ENCODE measurements at regions of chr4 and their contacts with region 1.

Region 1: GRCh38 chr4:156771171-156771837 is 200.3 kb downstream of the PDGFC start:
- DNase-seq: peak; percentile 98
- H3K4me3 Mint-ChIP-seq: peak overlapping the region; percentile 63
- H3K27ac Mint-ChIP-seq: peak overlapping the region; percentile 52
- H3K4me1 Mint-ChIP-seq: peaks cover 39% of the 10 kb centered on the region
- H3K27me3 Mint-ChIP-seq: no peaks in the 10 kb centered on the region
- CTCF ChIP-seq: no peak

Region 2: DNA sequence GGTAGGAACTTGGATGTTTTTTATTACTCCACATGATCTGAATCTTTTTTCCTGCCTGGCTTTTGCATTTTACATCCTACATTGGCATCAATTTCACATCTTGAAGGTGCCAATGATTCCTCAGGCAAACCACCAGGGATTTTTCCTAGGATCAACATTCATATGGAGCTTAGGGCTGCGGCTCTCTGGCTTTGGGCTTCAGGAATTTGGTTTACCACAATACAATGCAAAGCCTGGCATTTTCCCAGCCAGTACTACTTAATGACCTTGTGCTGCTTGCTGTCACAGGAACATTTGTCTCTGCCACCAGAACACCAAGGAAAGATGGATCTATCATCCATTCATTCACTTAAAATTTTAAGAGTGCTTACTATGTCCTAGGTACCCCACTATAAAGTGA is 19.6 kb after region 1 on chr4:
- CTCF ChIA-PET with region 1: no interaction called
- POLR2A ChIA-PET with region 1: interaction called, 13 read pairs
- intact Hi-C with region 1: no loop called
- DNase-seq: peak; percentile 79
- H3K4me3 Mint-ChIP-seq: no peak overlapping the region
- H3K27ac Mint-ChIP-seq: peak overlapping the region; percentile 54
- H3K4me1 Mint-ChIP-seq: peaks cover 38% of the 10 kb centered on the region
- H3K27me3 Mint-ChIP-seq: no peaks in the 10 kb centered on the region
- CTCF ChIP-seq: no peak

Region 3: DNA sequence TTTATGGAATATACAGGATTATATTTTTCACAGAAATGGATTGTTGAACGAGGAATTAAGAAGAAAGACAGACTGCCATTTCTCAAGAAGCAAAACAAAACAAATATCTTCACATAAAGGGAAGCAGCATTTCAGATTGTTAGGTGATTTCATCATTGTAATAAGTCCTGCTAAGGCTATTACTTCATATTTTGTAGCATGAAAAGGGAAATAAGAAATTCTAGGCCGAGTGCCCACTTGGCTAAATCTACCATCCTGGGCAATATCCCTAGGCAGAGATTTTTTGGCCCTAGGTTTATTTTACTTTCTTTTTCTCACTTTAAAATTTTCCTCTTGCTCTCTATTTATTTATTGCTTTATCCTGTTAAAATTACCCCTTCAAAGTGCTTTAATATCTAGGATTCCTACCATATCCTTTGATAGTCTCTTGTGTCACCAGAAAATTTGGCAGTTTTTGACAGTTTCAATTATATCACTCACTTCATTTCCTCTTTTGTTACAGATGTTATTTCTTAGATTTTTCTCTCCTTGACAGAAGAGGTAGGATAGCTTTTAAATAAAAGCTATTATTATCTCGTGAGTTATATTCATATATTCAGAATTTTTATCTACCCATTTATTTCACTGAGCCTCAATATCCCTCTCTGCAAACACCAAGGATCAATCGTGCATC is 58.0 kb after region 1 on chr4:
- CTCF ChIA-PET with region 1: no interaction called
- POLR2A ChIA-PET with region 1: interaction called, 40 read pairs
- intact Hi-C with region 1: loop called (anchors 1 kb)
- DNase-seq: peak; percentile 81
- H3K4me3 Mint-ChIP-seq: peak overlapping the region; percentile 67
- H3K27ac Mint-ChIP-seq: peak overlapping the region; percentile 94
- H3K4me1 Mint-ChIP-seq: peaks cover 35% of the 10 kb centered on the region
- H3K27me3 Mint-ChIP-seq: no peaks in the 10 kb centered on the region
- CTCF ChIP-seq: no peak

Region 4: GRCh38 chr4:156931267-156931666 is 160.0 kb after region 1 on chr4:
- CTCF ChIA-PET with region 1: no interaction called
- POLR2A ChIA-PET with region 1: interaction called, 9 read pairs
- intact Hi-C with region 1: loop called (anchors 1 kb)
- DNase-seq: peak; percentile 95
- H3K4me3 Mint-ChIP-seq: no peak overlapping the region
- H3K27ac Mint-ChIP-seq: peak overlapping the region; percentile 86
- H3K4me1 Mint-ChIP-seq: peaks cover 35% of the 10 kb centered on the region
- H3K27me3 Mint-ChIP-seq: no peaks in the 10 kb centered on the region
- CTCF ChIP-seq: no peak

Region 5: GRCh38 chr4:156949373-156949814 is 178.1 kb after region 1 on chr4:
- CTCF ChIA-PET with region 1: interaction called, 3 read pairs
- POLR2A ChIA-PET with region 1: interaction called, 64 read pairs
- intact Hi-C with region 1: loop called (anchors 2 kb)
- DNase-seq: peak; percentile 80
- H3K4me3 Mint-ChIP-seq: peak overlapping the region; percentile 51
- H3K27ac Mint-ChIP-seq: peak overlapping the region; percentile 96
- H3K4me1 Mint-ChIP-seq: peaks cover 78% of the 10 kb centered on the region
- H3K27me3 Mint-ChIP-seq: no peaks in the 10 kb centered on the region
- CTCF ChIP-seq: no peak

Region 6: GRCh38 chr4:157128395-157128794 is 357.1 kb after region 1 on chr4:
- CTCF ChIA-PET with region 1: no interaction called
- POLR2A ChIA-PET with region 1: no interaction called
- intact Hi-C with region 1: loop called (anchors 10 kb)
- DNase-seq: peak; percentile 38
- H3K4me3 Mint-ChIP-seq: no peak overlapping the region
- H3K27ac Mint-ChIP-seq: no peak overlapping the region
- H3K4me1 Mint-ChIP-seq: no peaks in the 10 kb centered on the region
- H3K27me3 Mint-ChIP-seq: no peaks in the 10 kb centered on the region
- CTCF ChIP-seq: peak; percentile 64